Naive thymus-derived CD4-positive, alpha-beta T cell (primary cell): ENCODE measurements at regions of chr7 and their contacts with region 1.

Region 1: GRCh38 chr7:157301610-157302120 is 35.1 kb upstream of the DNAJB6 start:
- DNase-seq: no peak
- ATAC-seq: no peak
- H3K4me3 ChIP-seq: no peak overlapping the region
- H3K4me3 Mint-ChIP-seq: peak overlapping the region; percentile 66 to 84 (median 72)
- H3K27ac ChIP-seq: no peak overlapping the region
- H3K27ac Mint-ChIP-seq: peak overlapping the region; percentile 3 to 88 (median 80)
- H3K4me1 ChIP-seq: peaks cover 10 to 23% of the 10 kb centered on the region in 2 donors
- H3K4me1 Mint-ChIP-seq: peaks cover 19 to 39% (median 36%) of the 10 kb centered on the region in 7 donors
- H3K27me3 ChIP-seq: no peaks in the 10 kb centered on the region
- H3K27me3 Mint-ChIP-seq: no peaks in the 10 kb centered on the region

Region 2: DNA sequence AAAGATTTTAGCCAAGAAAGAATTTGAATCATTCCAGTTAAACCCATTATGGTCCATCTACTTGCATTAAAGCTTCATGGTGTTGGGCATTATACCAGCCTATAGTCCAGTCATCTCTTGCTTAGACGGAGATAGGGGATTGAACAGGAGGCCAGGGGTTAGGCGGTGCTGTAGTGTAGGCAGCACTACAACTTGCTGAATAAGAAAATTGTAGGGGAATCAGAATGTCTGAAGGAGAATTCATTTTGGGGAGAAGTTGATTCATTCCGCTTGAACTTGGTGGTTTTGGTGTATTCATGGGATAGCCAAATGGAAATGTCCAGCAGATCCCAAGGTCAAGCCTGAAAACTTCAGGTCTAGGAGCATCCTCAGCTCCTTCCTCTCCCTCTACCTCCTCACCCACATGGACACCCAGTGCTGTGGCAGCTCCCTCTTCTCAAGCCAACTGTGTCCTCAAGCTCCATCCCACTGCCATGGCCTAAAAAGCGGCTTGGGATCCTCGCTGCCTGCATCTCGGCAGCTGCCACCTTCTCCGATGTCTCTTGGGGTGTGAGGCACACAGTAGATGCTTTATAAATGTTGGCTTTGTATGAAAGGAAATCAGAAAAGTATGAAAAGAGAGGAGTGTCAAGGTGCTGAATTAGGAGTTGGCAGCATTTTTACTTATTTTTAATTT is 227.6 kb before region 1 on chr7:
- CTCF ChIA-PET with region 1: no interaction called
- POLR2A ChIA-PET with region 1: no interaction called
- intact Hi-C with region 1: no loop called
- DNase-seq: no peak
- ATAC-seq: no peak
- H3K4me3 ChIP-seq: no peak overlapping the region
- H3K4me3 Mint-ChIP-seq: no peak overlapping the region
- H3K27ac ChIP-seq: no peak overlapping the region
- H3K27ac Mint-ChIP-seq: no peak overlapping the region
- H3K4me1 ChIP-seq: no peaks in the 10 kb centered on the region
- H3K4me1 Mint-ChIP-seq: peaks cover 0 to 7% (median 0%) of the 10 kb centered on the region in 7 donors
- H3K27me3 ChIP-seq: no peaks in the 10 kb centered on the region
- H3K27me3 Mint-ChIP-seq: peaks cover 34 to 69% (median 55%) of the 10 kb centered on the region in 5 donors

Region 3: GRCh38 chr7:157138424-157139110 is 163.1 kb before region 1 on chr7 and contains the start of gene UBE3C:
- CTCF ChIA-PET with region 1: interaction called, 3 read pairs
- POLR2A ChIA-PET with region 1: no interaction called
- intact Hi-C with region 1: loop called in 1 of 2 experiments (anchors 1 kb)
- DNase-seq: peak; percentile 88 to 96 (median 93)
- ATAC-seq: peak; percentile 91
- H3K4me3 ChIP-seq: peak within 1 kb of the TSS; percentile 82
- H3K4me3 Mint-ChIP-seq: peak within 1 kb of the TSS; percentile 77 to 93 (median 84)
- H3K27ac ChIP-seq: peak within 1 kb of the TSS; percentile 92
- H3K27ac Mint-ChIP-seq: peak within 1 kb of the TSS; percentile 76 to 99 (median 93)
- H3K4me1 ChIP-seq: peaks cover 35 to 43% of the 10 kb centered on the region in 2 donors
- H3K4me1 Mint-ChIP-seq: peaks cover 26 to 45% (median 42%) of the 10 kb centered on the region in 7 donors
- H3K27me3 ChIP-seq: no peaks in the 10 kb centered on the region
- H3K27me3 Mint-ChIP-seq: peaks cover 0 to 2% (median 0%) of the 10 kb centered on the region in 5 donors
- total RNA-seq, gene UBE3C: 41.6 to 64.6 (median 54.9) TPM

Region 4: GRCh38 chr7:157520249-157520648 is 218.6 kb after region 1 on chr7:
- CTCF ChIA-PET with region 1: no interaction called
- POLR2A ChIA-PET with region 1: no interaction called
- intact Hi-C with region 1: no loop called
- DNase-seq: no peak
- ATAC-seq: no peak
- H3K4me3 ChIP-seq: no peak overlapping the region
- H3K4me3 Mint-ChIP-seq: no peak overlapping the region
- H3K27ac ChIP-seq: no peak overlapping the region
- H3K27ac Mint-ChIP-seq: no peak overlapping the region
- H3K4me1 ChIP-seq: no peaks in the 10 kb centered on the region
- H3K4me1 Mint-ChIP-seq: peaks cover 0 to 4% (median 0%) of the 10 kb centered on the region in 7 donors
- H3K27me3 ChIP-seq: no peaks in the 10 kb centered on the region
- H3K27me3 Mint-ChIP-seq: peaks cover 0 to 10% (median 3%) of the 10 kb centered on the region in 5 donors